Breast epithelium (tissue), 4 donors: ENCODE measurements at regions of chr4 and their contacts with region 1.

Region 1: DNA sequence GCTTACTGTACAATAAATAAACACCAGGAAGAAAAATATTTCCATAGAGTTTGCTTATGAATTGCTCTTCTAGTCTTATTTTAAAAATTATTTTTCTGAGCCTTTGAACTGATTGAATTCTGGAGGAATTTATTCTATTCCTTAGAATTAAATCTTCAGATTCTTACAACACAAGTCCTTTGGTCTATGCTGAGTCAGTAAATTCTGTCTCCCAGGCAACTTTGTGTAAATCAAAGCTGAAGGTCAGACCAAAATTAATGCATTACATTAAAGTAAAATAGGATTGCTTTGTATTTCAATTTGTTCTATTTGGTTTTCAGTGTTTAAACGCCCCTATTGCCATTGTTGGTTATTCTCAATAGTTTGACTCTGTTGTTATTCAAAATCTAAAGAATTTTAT is 26.8 kb upstream of the STPG2 start:
- DNase-seq: no peak
- H3K4me3 ChIP-seq: no peak overlapping the region
- H3K27ac ChIP-seq: no peak overlapping the region
- H3K4me1 ChIP-seq: no peaks in the 10 kb centered on the region
- H3K27me3 ChIP-seq: no peaks in the 10 kb centered on the region
- CTCF ChIP-seq: no peak
- POLR2A ChIP-seq: no peak

Region 2: GRCh38 chr4:99755223-99755944 is 1585.3 kb after region 1 on chr4:
- intact Hi-C with region 1: loop called (anchors 5 kb)
- DNase-seq: no peak
- H3K4me3 ChIP-seq: no peak overlapping the region
- H3K27ac ChIP-seq: no peak overlapping the region
- H3K4me1 ChIP-seq: no peaks in the 10 kb centered on the region
- H3K27me3 ChIP-seq: no peaks in the 10 kb centered on the region
- CTCF ChIP-seq: no peak
- POLR2A ChIP-seq: no peak